Mucosa of descending colon (tissue), 3 donors: ENCODE measurements at regions of chr16 and their contacts with region 1.

Region 1: GRCh38 chr16:31073968-31074813 is at the starts of genes ZNF646 and ZNF668:
- DNase-seq: peak; percentile 97 to 99 (median 99)
- ATAC-seq: peak; percentile 91
- H3K4me3 ChIP-seq: peak within 1 kb of the TSS; percentile 86
- H3K4me1 ChIP-seq: peaks cover 17% of the 10 kb centered on the region
- CTCF ChIP-seq: no peak
- total RNA-seq, gene ZNF646: 19.1 to 20.3 (median 20.0) TPM
- total RNA-seq, gene ZNF668: 8.3 to 10.2 (median 9.8) TPM

Region 2: DNA sequence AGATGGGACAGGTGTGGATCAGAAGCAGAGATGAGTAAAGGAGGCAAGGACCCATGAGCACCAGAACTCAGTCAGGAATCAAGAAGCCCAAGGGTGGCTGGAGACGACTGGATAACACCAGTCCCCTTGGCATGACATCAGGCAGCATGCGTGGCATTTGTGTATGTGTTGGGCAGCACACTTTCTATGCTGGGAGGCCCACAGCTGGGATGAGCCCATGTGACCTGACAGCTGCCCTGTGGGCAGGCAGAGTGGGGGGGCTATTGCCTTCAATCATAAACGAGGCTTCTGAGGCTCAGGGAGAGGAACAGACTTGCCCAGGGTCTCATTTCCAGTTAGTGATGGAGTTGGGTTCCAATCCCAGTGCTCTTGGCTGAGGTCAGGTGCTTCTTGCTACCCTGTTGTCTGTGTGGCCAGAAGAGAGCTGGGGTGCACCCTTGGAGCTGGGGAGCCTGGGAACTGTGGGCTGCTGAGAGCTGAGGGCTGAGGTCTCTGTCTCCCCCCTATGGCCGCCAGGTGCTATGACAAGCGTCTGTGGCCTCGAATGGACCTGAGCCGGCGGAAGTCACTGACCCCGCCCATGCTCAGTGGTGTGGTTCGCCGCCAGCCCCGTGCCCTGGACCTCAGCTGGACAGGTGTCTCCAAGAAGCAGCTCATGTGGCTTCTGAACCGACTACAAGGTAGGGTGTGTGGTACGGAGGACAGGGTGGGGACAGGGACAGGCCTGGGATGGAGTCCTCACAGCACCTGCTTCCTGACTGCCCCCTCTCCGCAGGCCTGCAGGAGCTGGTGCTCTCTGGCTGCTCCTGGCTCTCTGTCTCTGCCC is 132.4 kb before region 1 on chr16:
- intact Hi-C with region 1: no loop called
- DNase-seq: peak; percentile 81 to 88 (median 85)
- ATAC-seq: peak; percentile 97
- H3K4me3 ChIP-seq: no peak overlapping the region
- H3K4me1 ChIP-seq: peaks cover 15% of the 10 kb centered on the region
- CTCF ChIP-seq: peak; percentile 89

Region 3: GRCh38 chr16:31032736-31033708 is 41.2 kb before region 1 on chr16 and contains the start of gene STX4:
- intact Hi-C with region 1: loop called in 1 of 2 experiments (anchors 2 kb)
- DNase-seq: peak; percentile 98 to 99 (median 99)
- ATAC-seq: peak; percentile 95
- H3K4me3 ChIP-seq: peak within 1 kb of the TSS; percentile 79
- H3K4me1 ChIP-seq: peaks cover 12% of the 10 kb centered on the region
- CTCF ChIP-seq: no peak
- total RNA-seq, gene STX4: 74.8 to 87.7 (median 86.9) TPM